ENCODE measurements at regions of chr6 and their contacts with region 1.

Region 1: DNA sequence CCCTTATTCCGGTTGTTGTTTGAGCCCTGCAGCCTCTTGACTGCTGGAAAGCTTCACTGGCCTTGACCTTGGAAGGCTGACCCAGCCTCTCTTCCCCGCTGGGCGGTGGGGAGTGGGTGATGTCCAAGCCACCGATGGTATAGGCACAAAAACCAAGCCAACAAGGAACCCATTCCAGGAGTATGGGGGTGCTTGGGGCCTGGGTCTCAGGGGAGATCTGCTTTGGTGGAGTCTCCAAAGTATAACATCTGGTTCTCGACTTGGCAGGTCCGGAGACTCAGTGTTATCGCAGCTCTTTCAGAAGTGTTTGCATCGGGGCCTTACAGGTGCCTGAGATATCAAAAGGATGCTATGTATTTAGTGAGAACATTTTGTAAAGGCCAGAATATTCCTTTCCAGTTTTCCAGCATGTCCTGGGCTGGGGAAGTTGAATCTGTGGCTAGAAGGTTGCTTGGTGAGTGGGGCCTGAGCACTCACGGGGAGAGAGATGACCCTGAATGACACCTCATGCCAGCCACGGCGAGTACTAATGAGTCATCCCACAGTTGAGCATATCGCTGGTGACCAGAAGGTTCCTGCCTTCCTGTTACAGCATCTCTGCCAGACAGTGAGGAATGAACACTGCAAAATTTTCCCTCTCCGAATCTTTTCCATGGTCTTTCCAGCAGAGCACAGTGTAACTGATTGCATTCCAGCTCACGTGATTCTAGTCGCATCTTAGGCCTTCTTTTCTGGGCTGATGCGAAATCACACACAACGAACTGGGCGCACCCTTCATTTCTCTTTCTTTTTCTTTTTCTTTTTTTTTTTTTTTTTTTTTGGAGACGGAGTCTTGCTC is 133.9 kb downstream of the ZDHHC14 start:
- DNase-seq: peak; percentile 94 to 97 (median 96)
- ATAC-seq: peak; percentile 83
- H3K4me3 ChIP-seq: peak overlapping the region; percentile 36
- H3K27ac ChIP-seq: peak overlapping the region; percentile 98
- H3K4me1 ChIP-seq: peaks cover 63 to 72% of the 10 kb centered on the region in 2 experiments
- H3K27me3 ChIP-seq: no peaks in the 10 kb centered on the region
- CTCF ChIP-seq: no peak; a peak in 1 of 6 replicates
- EP300 ChIP-seq: peak; percentile 99
- POLR2A ChIP-seq: peak; percentile 73
- RAD21 ChIP-seq: no peak; a peak in 2 of 4 replicates

Region 2: DNA sequence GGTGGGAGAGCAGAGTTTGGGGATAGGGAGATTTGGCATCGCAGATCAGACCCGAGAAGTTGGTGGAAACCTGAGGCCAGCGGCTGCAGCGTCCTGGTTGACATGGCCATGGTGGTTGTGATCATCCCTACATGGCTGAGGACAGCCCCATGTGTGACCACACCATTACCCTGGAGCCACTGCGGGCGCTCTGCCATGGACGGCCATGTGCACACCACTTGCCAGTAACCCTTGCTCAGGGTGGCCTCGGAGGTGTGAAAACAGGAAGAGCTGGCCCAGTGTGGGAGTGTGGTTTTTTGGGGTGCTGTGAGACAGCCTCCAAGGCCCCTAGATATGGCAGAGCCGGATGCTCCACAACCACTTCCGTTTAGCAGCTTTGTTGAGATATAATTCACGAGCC is 256.0 kb before region 1 on chr6:
- CTCF ChIA-PET with region 1: no interaction called
- POLR2A ChIA-PET with region 1: no interaction called
- in situ Hi-C with region 1: no loop called
- intact Hi-C with region 1: no loop called
- DNase-seq: no peak
- ATAC-seq: peak; percentile 13; the same call in 2 of the 3 replicates
- H3K4me3 ChIP-seq: no peak overlapping the region
- H3K27ac ChIP-seq: no peak overlapping the region
- H3K4me1 ChIP-seq: 0 out of 5 replicates have a peak, but pooled peaks cover 0 to 6% of the 10 kb centered on the region in 2 experiments
- H3K27me3 ChIP-seq: peaks cover 37 to 70% of the 10 kb centered on the region in 2 experiments
- CTCF ChIP-seq: no peak
- EP300 ChIP-seq: no peak
- POLR2A ChIP-seq: no peak
- RAD21 ChIP-seq: no peak

Region 3: DNA sequence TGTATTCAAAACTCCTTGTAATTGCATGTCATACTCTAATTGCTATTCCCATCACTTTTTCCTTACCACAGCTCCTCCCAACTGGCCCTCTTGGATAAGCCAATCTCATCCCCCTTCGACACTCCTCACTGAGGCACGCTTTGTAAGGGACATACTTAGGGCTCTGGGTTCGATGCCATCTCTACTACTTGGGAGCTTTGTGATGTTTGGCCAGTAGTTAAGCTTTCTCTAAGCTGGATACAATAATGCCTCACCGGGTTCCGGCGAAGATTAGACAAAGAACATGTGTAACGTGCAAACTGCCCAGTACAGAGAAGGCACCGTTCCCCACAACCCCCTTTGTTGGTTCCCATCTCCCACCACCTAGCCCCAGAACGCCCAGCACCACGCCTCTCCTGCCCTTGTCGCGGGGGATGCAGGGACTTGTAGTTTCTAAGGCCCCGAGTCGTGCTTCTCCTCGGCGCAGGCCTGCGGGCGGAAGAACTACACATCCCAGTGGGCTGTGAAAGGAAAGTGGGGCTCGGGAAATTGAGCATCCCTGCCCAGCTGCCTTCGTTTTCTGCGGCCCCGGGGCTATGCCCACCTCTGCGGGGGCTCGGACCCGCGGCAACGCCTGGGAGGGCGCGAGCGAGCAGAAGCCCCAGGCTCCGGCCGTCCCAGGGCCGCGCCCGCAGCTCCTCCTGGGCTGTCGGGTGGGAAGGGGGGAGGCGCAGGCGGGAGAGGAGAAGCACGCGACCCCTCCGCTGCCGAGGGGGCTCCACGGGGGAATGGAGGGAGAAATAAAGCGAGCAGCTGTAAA is 135.0 kb before region 1 on chr6:
- CTCF ChIA-PET with region 1: no interaction called
- POLR2A ChIA-PET with region 1: interaction called, 6 read pairs
- in situ Hi-C with region 1: no loop called
- intact Hi-C with region 1: loop called (anchors 5 kb)
- DNase-seq: peak; percentile 82 to 96 (median 86)
- ATAC-seq: peak; percentile 91
- H3K4me3 ChIP-seq: peak overlapping the region; percentile 77
- H3K27ac ChIP-seq: peak overlapping the region; percentile 75
- H3K4me1 ChIP-seq: peaks cover 21 to 29% of the 10 kb centered on the region in 2 experiments; a peak in 4 of 5 replicates
- H3K27me3 ChIP-seq: no peaks in the 10 kb centered on the region
- CTCF ChIP-seq: no peak; a peak in 1 of 6 replicates
- EP300 ChIP-seq: no peak
- POLR2A ChIP-seq: no peak
- RAD21 ChIP-seq: no peak; a peak in 1 of 4 replicates

Region 4: DNA sequence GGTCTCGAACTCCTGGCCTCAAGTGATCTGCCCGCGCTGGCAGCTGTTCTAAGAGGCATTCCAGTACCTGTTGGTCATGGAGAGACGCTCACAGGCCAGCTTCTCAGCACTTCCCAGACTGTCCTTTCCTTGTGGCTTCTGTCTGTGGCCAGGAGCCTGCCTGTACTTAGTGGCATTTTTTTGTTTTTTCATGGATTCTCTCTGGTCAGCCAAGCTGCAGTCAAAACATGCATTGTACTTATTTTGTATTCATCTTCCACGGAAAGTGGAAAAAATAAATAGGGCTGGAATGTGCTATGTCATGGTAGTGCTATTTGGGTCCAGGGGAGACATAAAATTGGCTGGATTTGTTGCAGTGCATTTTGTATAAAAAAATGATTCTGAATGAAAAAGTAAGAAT is 104.8 kb before region 1 on chr6:
- CTCF ChIA-PET with region 1: no interaction called
- POLR2A ChIA-PET with region 1: no interaction called
- in situ Hi-C with region 1: no loop called
- intact Hi-C with region 1: no loop called
- DNase-seq: no peak
- ATAC-seq: no peak
- H3K4me3 ChIP-seq: no peak overlapping the region
- H3K27ac ChIP-seq: no peak overlapping the region
- H3K4me1 ChIP-seq: peaks cover 3 to 6% of the 10 kb centered on the region in 2 experiments; a peak in 3 of 5 replicates
- H3K27me3 ChIP-seq: no peaks in the 10 kb centered on the region
- CTCF ChIP-seq: no peak
- EP300 ChIP-seq: no peak
- POLR2A ChIP-seq: no peak
- RAD21 ChIP-seq: no peak

Region 5: DNA sequence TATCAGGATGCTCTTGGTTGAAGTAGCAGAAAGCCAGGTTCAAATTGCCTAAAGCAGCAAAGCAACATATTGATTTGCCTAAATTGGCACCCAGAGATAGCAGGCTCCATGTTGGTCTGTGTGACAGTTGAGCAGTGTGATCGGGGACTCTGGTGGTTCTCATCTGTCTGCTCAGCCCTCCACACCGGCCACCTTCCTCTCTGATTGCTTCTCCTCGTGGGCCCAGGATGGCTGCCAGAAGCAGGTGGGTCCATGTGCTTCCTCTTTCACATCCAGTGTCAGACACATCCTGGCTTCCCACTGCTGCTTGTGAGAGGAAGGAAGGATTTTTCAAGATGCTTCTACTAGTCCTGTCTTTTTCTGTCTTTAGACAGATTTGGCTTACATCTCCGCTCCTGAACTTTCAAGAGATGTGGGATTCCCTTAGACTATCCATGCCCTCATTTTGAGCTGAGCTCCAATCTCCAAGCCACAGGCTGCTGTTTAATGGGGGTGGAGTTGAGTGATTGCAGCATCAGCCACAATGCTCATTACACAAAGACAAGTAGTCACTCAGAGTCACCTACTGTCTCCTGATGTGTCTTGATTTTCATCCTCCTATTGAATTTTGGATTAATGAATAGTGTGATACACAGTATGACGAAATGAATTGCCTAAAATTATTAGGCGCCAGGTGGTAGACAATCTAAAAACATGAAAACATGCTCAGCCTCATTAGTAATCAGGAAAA is 11.7 kb before region 1 on chr6:
- CTCF ChIA-PET with region 1: no interaction called
- POLR2A ChIA-PET with region 1: interaction called, 21 read pairs
- in situ Hi-C with region 1: no loop called
- intact Hi-C with region 1: no loop called
- DNase-seq: peak in 1 of 4 experiments; percentile 36
- ATAC-seq: peak; percentile 74
- H3K4me3 ChIP-seq: no peak overlapping the region
- H3K27ac ChIP-seq: no peak overlapping the region; the same call in 2 of the 3 replicates
- H3K4me1 ChIP-seq: peaks cover 3 to 16% of the 10 kb centered on the region in 2 experiments; a peak in 3 of 5 replicates
- H3K27me3 ChIP-seq: no peaks in the 10 kb centered on the region
- CTCF ChIP-seq: no peak
- EP300 ChIP-seq: no peak
- POLR2A ChIP-seq: no peak
- RAD21 ChIP-seq: no peak

Region 6: DNA sequence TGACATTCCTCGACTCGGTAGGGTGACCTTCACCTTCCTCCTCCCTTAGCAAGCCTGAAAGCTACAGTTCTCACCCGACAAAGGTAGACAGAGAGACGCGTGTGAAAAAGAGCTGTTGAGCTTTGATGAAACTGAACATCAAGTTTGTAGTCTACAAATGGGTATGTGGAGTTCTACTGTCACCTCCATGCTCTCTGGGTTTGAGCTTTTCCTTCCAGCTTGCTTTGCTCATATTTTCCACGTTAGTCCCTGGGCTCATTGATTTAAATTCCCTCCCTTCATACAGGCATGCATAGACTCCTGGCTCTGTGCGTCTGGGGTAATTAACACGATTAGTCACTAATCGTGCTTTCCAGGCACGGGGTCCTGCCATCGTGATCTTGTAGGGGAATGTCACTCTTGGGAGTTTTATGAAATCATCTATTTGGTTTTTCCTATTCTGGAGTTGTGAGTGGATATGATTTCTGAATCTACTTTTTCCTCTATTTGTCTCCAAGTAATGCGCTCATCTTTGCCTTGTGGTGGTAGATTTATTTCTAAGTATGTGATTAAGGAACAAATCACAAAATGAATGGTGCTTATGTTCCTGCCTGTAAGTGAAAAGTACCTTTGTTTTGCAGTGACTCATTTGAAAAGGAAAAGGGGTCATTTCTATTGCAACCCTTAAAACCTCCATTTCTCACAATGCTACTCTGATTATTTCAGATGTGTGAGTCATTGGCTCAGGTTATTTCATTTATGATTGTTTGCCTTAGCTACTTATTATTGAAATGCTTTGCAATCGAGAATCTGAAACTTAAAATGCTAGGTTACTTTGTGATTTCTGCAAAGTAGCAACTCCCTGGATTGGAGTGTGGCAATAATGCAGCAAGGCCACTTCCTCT is 20.7 kb after region 1 on chr6:
- CTCF ChIA-PET with region 1: no interaction called
- POLR2A ChIA-PET with region 1: interaction called, 13 read pairs
- in situ Hi-C with region 1: no loop called
- intact Hi-C with region 1: no loop called
- DNase-seq: no peak
- ATAC-seq: no peak
- H3K4me3 ChIP-seq: no peak overlapping the region
- H3K27ac ChIP-seq: no peak overlapping the region
- H3K4me1 ChIP-seq: peaks cover 13 to 22% of the 10 kb centered on the region in 2 experiments
- H3K27me3 ChIP-seq: no peaks in the 10 kb centered on the region
- CTCF ChIP-seq: no peak
- EP300 ChIP-seq: no peak
- POLR2A ChIP-seq: no peak
- RAD21 ChIP-seq: no peak

Region 7: DNA sequence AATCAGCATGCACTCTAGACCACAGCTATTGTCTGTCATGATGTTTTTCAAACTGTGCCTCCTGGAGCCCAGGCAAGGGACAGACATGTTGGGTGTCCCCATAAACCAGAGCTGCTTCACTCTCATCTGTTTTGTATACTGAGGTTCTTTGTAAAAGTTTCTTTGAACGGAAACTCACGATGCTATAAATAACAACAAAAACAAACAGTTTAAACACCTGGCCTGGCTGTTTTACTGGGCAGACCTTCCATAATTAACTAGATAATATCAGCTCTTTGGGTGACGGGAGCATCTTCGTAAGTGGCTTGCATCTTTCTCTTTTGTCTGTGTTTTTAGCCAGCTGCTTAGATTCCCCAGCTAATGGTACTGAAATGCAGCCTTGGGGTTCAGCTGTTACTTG is 56.4 kb after region 1 on chr6:
- CTCF ChIA-PET with region 1: no interaction called
- POLR2A ChIA-PET with region 1: no interaction called
- in situ Hi-C with region 1: no loop called
- intact Hi-C with region 1: no loop called
- DNase-seq: no peak
- ATAC-seq: no peak
- H3K4me3 ChIP-seq: no peak overlapping the region
- H3K27ac ChIP-seq: no peak overlapping the region
- H3K4me1 ChIP-seq: no peaks in the 10 kb centered on the region
- H3K27me3 ChIP-seq: no peaks in the 10 kb centered on the region
- CTCF ChIP-seq: no peak
- EP300 ChIP-seq: no peak
- POLR2A ChIP-seq: no peak
- RAD21 ChIP-seq: no peak